ENCODE measurements at regions of chr17 and their contacts with region 1.

Region 1: GRCh38 chr17:45013021-45013997 is 38.1 kb downstream of the DCAKD start:
- DNase-seq: no peak
- CTCF ChIP-seq: no peak

Region 2: DNA sequence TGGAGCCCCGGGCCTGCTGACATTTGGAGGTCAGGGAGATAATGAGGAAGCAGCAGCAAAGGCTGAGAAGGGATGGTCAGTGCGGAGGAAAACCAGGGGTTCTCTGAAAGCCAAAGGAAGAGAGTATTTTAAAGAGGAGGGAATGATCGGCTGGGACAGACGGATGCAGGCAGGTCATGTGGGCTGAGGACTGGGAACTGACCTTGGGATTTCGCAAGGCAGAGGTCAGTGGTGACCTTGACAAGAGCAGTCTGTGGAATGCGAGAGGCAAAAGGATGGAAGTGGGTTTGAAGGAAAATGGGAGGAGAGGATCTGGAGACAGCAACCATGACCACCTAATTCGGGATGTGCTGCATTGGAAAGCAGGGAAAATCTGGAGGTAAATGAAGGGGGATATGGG is 124.3 kb before region 1 on chr17:
- CTCF ChIA-PET with region 1: no interaction called
- POLR2A ChIA-PET with region 1: no interaction called
- DNase-seq: no peak
- CTCF ChIP-seq: no peak

Region 3: DNA sequence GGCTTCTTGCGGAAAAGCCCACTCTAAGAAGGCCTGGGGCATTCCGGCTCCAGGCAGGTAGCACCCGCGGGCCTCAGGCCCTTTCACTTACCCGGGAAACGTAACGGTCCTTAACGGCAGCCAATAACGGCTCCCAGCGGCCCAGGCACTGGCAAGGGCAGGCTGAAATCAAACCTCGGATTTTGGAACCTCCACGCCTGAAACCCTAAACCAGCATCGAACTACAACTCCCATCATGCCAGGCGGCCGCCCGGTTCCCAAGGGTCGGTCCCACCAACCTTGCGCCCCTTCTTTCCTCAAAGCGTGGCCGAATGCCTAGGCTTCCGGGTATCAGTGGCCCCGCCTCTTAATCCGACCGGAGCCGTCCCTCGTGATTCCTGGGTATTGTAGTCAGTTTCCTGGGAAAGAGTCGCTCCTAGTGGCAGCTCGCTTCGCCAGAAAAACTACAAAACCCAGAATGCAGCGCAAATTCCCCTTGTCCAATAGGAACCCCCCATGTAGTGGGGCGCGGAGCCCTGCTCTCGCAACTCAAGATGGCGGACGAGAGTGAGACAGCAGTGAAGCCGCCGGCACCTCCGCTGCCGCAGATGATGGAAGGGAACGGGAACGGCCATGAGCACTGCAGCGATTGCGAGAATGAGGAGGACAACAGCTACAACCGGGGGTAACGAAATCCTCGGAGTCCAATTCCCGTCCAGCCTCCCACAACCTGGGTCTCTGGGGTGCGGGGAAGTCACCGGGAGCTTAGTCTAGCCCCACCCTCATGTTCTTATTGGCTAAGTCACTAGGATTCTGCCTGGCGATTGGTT is 47.7 kb after region 1 on chr17 and contains the start of gene NMT1:
- CTCF ChIA-PET with region 1: interaction called, 5 read pairs
- POLR2A ChIA-PET with region 1: interaction called, 10 read pairs
- DNase-seq: peak; percentile 92
- CTCF ChIP-seq: no peak